Testis (tissue), 5 donors: ENCODE measurements at regions of chr1 and their contacts with region 1.

Region 1: DNA sequence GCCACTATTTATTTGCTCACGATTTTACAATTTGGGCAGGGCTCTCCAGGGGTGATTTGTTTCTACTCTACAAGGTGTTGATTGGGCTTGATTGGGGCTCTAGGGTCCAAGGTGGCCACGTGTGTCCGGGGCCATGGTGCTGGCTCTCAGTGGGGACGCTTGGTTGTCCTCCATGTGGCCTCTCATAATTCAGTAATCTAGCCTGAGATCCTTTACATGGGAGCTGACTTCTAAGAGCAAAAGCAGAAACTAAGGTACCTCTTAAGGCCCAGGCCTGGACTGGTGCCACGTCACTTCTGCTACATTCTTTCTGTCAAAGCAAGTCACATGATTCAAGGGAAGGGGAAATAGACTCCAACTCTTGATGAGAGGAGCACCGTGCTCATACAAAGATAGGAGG is 8.1 kb upstream of the PSRC1 start:
- DNase-seq: no peak
- H3K4me3 ChIP-seq: no peak overlapping the region
- H3K27ac ChIP-seq: no peak overlapping the region
- H3K4me1 ChIP-seq: no peaks in the 10 kb centered on the region
- H3K27me3 ChIP-seq: no peaks in the 10 kb centered on the region
- CTCF ChIP-seq: no peak
- POLR2A ChIP-seq: no peak

Region 2: DNA sequence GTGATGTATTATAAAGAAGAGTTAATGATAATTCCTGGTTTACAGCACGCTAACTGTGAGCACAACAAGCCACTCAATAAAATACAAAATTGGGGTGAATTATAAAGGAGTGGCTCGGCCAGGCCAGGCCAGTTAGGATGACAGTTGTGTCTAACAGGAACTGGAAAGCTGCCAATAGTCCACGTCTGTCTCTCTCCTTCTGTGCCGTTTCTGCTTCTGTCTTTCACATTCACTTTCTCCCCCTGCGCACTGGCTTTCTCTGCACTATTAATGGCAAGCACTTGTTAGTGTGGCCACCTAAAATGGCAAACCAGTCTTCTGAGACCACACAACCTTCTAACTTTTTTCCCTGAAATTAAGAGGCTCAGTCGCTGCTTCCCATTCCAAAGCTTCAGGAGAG is 1755.9 kb before region 1 on chr1:
- intact Hi-C with region 1: loop called (anchors 5 kb)
- DNase-seq: no peak
- H3K4me3 ChIP-seq: no peak overlapping the region
- H3K27ac ChIP-seq: no peak overlapping the region
- H3K4me1 ChIP-seq: no peaks in the 10 kb centered on the region
- H3K27me3 ChIP-seq: no peaks in the 10 kb centered on the region
- CTCF ChIP-seq: no peak
- POLR2A ChIP-seq: no peak